Activated CD4-positive, alpha-beta memory T cell treated with anti-CD3 and anti-CD28 coated beads, Interleukin-2, amount 10 ng/mL, durations not matched to agents 7 days and 5 days (primary cell): ENCODE measurements at regions of chr20 and their contacts with region 1.

Region 1: GRCh38 chr20:46520976-46521579 is 7.7 kb upstream of the ZNF334 start:
- DNase-seq: peak; percentile 72
- H3K4me3 Mint-ChIP-seq: no peak overlapping the region
- H3K27ac Mint-ChIP-seq: no peak overlapping the region
- H3K4me1 Mint-ChIP-seq: peaks cover 4% of the 10 kb centered on the region
- H3K27me3 Mint-ChIP-seq: peaks cover 32% of the 10 kb centered on the region

Region 2: DNA sequence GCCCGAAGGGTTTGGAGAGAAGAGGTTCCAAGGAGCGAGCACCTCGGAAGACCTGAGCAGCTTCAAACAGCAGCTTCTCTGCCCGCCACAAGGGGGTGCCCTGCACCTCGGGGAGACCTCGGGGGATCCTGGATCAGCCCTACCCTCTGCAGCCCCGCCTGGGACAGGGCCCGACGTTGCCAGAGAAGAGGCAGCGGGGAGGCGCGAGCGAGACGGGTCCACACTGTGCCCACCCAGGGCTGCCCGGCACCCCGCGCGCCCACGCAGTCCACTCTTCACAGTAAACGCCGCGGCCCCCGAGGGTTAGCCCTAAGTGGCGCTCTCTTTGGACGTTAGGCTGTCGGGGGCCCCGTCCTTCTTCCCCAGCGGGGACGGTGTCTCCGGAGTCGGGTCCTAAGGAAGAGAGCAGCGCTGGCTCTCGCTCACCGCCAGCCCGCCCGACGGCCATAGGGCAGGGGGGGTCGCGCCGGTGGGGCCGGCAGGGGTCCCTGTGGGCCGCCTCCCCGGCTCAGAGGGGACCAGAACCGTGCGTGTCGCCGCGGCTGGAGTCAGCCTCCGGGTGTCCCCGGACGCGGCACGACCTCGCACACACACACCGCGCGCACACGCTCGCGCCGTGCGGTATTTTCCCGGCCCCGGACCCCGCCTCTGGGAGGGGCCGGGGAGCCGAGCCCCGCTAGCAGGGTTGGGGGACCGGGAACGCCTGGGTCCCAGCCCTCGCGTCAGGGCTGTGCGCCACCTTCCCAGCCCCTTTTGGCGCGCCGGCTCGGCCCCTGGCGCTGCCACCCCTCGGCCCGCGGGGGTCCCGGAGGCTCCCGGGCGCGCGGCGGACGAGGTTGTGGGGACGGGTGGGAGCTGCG is 213.7 kb before region 1 on chr20:
- CTCF ChIA-PET with region 1: no interaction called
- POLR2A ChIA-PET with region 1: no interaction called
- DNase-seq: peak; percentile 72
- H3K4me3 Mint-ChIP-seq: no peak overlapping the region
- H3K27ac Mint-ChIP-seq: no peak overlapping the region
- H3K4me1 Mint-ChIP-seq: peaks cover 7% of the 10 kb centered on the region
- H3K27me3 Mint-ChIP-seq: peaks cover 72% of the 10 kb centered on the region

Region 3: DNA sequence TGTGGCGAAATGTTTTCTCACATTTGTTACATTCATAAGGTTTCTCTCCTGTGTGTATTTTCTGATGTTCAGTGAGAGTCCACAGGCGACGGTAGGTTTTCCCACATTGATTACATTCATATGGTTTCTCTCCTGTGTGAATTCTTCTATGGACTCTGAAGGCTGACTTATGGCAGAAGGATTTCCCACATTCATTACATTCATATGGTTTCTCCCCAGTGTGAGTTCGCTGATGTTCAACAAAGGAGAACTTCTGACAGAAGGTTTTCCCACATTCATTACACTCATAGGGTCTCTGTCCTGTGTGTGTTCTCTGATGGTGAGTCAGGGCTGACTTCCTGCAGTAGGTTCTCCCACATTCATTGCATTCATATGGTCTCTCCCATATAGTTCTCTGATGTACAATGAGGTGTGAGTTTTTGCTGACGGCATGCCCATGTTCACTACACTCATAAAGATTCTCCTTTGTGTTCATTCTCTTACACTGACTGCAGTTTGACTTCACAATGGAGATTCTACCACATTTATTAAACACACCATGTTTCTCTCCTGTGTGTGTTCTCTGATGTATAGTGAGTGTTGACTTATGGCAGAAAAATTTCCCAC is 19.6 kb before region 1 on chr20:
- CTCF ChIA-PET with region 1: no interaction called
- POLR2A ChIA-PET with region 1: no interaction called
- DNase-seq: no peak
- H3K4me3 Mint-ChIP-seq: no peak overlapping the region
- H3K27ac Mint-ChIP-seq: no peak overlapping the region
- H3K4me1 Mint-ChIP-seq: no peaks in the 10 kb centered on the region
- H3K27me3 Mint-ChIP-seq: peaks cover 23% of the 10 kb centered on the region

Region 4: DNA sequence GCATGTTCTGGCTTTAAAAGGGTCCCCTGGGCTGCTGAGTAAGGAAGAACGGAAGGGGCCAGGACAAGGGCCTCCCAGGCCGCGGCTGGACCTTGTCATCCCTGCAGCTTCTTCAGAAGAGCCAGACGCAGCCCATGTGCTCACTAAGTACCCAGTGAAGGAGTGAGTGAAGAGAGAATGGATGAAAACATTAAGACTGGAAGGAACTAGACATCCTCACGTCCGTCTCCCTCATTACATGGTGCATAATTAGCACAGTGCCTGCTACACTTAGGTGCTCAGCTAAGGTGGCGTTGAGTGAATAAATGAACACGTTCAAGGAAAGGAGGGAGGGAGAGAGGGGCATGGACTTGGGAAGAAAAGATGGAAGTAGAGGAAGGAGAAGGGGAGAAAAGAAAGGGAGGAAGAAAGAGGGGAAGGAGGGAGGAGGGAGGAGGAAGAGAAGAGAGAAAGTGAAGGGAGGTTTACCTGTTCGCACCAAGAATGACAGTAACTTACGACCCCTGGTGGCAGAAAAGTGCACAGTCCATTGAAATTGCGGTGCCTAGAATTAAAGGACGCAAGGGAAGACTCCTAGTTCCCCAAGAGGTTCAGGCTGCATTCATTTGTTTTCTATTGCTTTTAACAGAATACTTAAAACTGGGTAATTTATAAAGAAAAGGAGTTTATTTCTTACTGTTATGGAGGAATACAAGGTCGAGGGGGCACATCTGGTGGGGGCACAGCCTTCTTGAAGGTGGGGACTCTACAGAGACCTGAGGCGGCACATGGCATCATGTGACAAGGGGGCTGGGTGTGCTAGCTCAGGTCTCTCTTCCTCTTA is 160.2 kb after region 1 on chr20:
- CTCF ChIA-PET with region 1: interaction called, 15 read pairs
- POLR2A ChIA-PET with region 1: no interaction called
- DNase-seq: peak; percentile 74
- H3K4me3 Mint-ChIP-seq: no peak overlapping the region
- H3K27ac Mint-ChIP-seq: no peak overlapping the region
- H3K4me1 Mint-ChIP-seq: peaks cover 26% of the 10 kb centered on the region
- H3K27me3 Mint-ChIP-seq: no peaks in the 10 kb centered on the region